Mammary epithelial cell (primary cell): ENCODE measurements at regions of chr21 and their contacts with region 1.

Region 1: GRCh38 chr21:38505654-38506515 is 7.6 kb upstream of the ERG start:
- DNase-seq: peak; percentile 76
- H3K4me3 ChIP-seq: no peak overlapping the region
- H3K27ac ChIP-seq: peak overlapping the region; percentile 5
- H3K4me1 ChIP-seq: peaks cover 20% of the 10 kb centered on the region
- H3K27me3 ChIP-seq: no peaks in the 10 kb centered on the region
- CTCF ChIP-seq: peak; percentile 73 to 78

Region 2: DNA sequence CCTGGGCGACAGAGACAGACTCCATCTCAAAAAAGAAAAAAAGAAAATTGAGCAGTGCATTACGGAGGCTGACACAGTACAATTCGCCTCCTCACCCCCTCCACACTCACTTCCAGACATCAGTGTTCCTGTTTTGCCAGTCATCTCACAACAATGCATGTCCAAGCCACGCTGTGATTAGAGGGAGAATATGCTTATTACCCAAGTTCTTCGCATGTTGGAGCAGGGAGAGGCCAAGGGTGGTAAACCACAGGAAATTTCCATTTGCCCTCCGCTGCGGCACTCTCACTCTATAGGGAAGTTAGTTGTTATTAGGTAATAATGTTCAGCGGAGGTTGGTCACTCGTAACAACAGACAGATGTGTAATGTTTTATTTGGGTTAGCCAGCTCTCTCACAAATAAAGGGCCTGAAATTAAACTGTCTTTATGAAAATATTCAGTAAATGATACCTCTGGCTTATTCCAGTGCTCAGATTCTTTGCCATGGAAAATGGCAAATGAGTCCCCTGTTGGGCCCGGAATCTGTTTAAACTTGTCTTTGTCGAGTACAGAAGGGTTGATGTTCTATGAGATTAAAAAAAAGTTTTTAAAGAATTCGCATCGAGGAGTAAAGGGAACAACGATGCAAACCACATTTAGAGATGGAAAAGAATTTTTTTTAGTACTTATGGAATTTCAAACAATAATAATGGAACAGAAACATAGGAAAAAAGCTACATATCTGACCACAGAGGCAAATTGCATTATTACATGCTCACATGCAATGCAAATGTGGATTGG is 216.0 kb before region 1 on chr21:
- CTCF ChIA-PET with region 1: no interaction called
- dilution Hi-C with region 1: no loop called
- in situ Hi-C with region 1: no loop called
- intact Hi-C with region 1: no loop called
- DNase-seq: peak; percentile 99
- H3K4me3 ChIP-seq: no peak overlapping the region
- H3K27ac ChIP-seq: peak overlapping the region; percentile 93
- H3K4me1 ChIP-seq: peaks cover 48% of the 10 kb centered on the region
- H3K27me3 ChIP-seq: no peaks in the 10 kb centered on the region
- CTCF ChIP-seq: no peak

Region 3: DNA sequence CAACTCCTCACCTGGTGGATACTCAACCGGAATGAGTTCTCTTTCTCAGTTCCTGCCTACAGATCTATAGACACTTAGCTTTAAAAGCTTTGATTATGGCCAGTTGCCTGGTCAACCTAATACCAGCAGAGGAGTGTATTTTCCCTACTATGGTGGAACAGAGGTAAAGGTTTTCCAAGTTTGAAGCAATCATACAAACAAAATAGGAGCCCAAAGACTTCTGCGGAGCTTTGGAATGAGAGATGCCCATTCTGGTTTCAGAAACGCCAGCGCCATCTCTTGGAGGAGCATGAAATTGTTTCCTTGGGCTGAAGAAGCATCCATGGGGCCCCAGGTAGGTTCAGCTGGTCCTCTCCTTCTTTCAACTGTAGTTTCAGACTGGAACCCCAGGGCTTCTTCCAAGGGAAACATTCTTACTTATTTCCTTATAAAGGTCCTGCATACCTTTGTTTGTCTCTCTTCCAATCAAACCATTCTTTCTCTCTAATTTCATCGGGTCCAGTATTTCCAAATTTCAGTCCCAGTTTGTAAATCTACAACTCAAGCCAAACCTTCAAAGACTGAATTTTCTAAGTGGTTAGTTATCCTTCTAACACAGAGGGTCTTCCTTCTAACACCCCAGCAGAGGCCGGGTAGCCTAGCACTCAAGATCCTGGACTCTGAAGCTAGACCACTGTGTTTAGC is 153.2 kb before region 1 on chr21:
- CTCF ChIA-PET with region 1: no interaction called
- dilution Hi-C with region 1: no loop called
- in situ Hi-C with region 1: no loop called
- intact Hi-C with region 1: no loop called
- DNase-seq: peak; percentile 69
- H3K4me3 ChIP-seq: no peak overlapping the region
- H3K27ac ChIP-seq: peak overlapping the region; percentile 11
- H3K4me1 ChIP-seq: peaks cover 10% of the 10 kb centered on the region
- H3K27me3 ChIP-seq: no peaks in the 10 kb centered on the region
- CTCF ChIP-seq: peak; percentile 80 to 94

Region 4: GRCh38 chr21:38380481-38381137 is 125.3 kb before region 1 on chr21:
- CTCF ChIA-PET with region 1: no interaction called
- dilution Hi-C with region 1: no loop called
- in situ Hi-C with region 1: no loop called
- intact Hi-C with region 1: loop called (anchors 2 kb)
- DNase-seq: no peak
- H3K4me3 ChIP-seq: no peak overlapping the region
- H3K27ac ChIP-seq: no peak overlapping the region
- H3K4me1 ChIP-seq: no peaks in the 10 kb centered on the region
- H3K27me3 ChIP-seq: no peaks in the 10 kb centered on the region
- CTCF ChIP-seq: peak; percentile 29 to 30

Region 5: GRCh38 chr21:38468989-38469388 is 36.9 kb before region 1 on chr21:
- CTCF ChIA-PET with region 1: no interaction called
- dilution Hi-C with region 1: no loop called
- in situ Hi-C with region 1: no loop called
- intact Hi-C with region 1: loop called (anchors 2 kb)
- DNase-seq: peak; percentile 32
- H3K4me3 ChIP-seq: no peak overlapping the region
- H3K27ac ChIP-seq: no peak overlapping the region
- H3K4me1 ChIP-seq: peaks cover 17% of the 10 kb centered on the region
- H3K27me3 ChIP-seq: no peaks in the 10 kb centered on the region
- CTCF ChIP-seq: no peak

Region 6: GRCh38 chr21:38712071-38712470 is 206.2 kb after region 1 on chr21:
- CTCF ChIA-PET with region 1: no interaction called
- dilution Hi-C with region 1: no loop called
- in situ Hi-C with region 1: loop called (anchors 10 to 25 kb)
- intact Hi-C with region 1: loop called (anchors 1 kb)
- DNase-seq: peak; percentile 44
- H3K4me3 ChIP-seq: no peak overlapping the region
- H3K27ac ChIP-seq: no peak overlapping the region
- H3K4me1 ChIP-seq: no peaks in the 10 kb centered on the region
- H3K27me3 ChIP-seq: peaks cover 4% of the 10 kb centered on the region
- CTCF ChIP-seq: peak; percentile 58 to 79

Region 7: GRCh38 chr21:39125752-39126485 is 620.0 kb after region 1 on chr21:
- CTCF ChIA-PET with region 1: no interaction called
- dilution Hi-C with region 1: no loop called
- in situ Hi-C with region 1: loop called (anchors 10 to 25 kb)
- intact Hi-C with region 1: no loop called
- DNase-seq: peak; percentile 62
- H3K4me3 ChIP-seq: no peak overlapping the region
- H3K27ac ChIP-seq: no peak overlapping the region
- H3K4me1 ChIP-seq: no peaks in the 10 kb centered on the region
- H3K27me3 ChIP-seq: no peaks in the 10 kb centered on the region
- CTCF ChIP-seq: peak; percentile 54 to 79

Region 8: GRCh38 chr21:39137248-39138178 is 631.6 kb after region 1 on chr21:
- CTCF ChIA-PET with region 1: no interaction called
- dilution Hi-C with region 1: no loop called
- in situ Hi-C with region 1: loop called (anchors 10 to 25 kb)
- intact Hi-C with region 1: loop called (anchors 1 kb)
- DNase-seq: peak; percentile 51
- H3K4me3 ChIP-seq: no peak overlapping the region
- H3K27ac ChIP-seq: no peak overlapping the region
- H3K4me1 ChIP-seq: peaks cover 14% of the 10 kb centered on the region
- H3K27me3 ChIP-seq: no peaks in the 10 kb centered on the region
- CTCF ChIP-seq: peak; percentile 10 to 44